CD4-positive, alpha-beta T cell (primary cell): ENCODE measurements at regions of chr16 and their contacts with region 1.

Region 1: DNA sequence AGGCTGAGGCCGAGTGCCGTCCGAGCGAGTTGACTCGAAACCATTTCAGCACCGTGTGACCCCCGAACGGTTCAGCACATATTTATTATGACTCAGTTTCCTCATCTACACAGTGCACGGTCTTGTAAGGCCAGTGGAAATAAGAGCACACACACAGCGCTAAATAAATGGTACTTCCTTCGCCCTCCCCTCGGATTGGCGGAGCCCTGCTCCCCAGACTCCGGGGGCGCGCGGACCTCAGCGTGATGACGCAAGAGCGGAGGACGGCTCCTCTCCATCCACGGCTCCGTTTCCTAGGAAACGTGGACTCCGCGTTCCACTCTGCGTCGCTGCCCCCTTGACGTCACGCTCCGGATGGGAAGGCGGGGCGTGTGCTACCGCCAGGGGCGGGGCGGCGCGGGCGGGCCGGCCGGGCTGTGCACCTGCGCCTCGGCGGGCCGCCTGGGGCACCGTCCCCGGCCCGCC is at the start of gene PARD6A:
- DNase-seq: peak; percentile 86 to 99 (median 93)
- ATAC-seq: peak; percentile 76
- H3K4me3 ChIP-seq: peak within 1 kb of the TSS; percentile 95
- H3K4me3 Mint-ChIP-seq: peak within 1 kb of the TSS; percentile 95
- H3K27ac ChIP-seq: peak within 1 kb of the TSS; percentile 93 to 99
- H3K27ac Mint-ChIP-seq: peak within 1 kb of the TSS; percentile 94
- H3K4me1 ChIP-seq: peaks cover 38% of the 10 kb centered on the region
- H3K4me1 Mint-ChIP-seq: peaks cover 37% of the 10 kb centered on the region
- H3K27me3 ChIP-seq: no peaks in the 10 kb centered on the region
- H3K27me3 Mint-ChIP-seq: no peaks in the 10 kb centered on the region
- CTCF ChIP-seq: no peak
- total RNA-seq, gene PARD6A: 4.5 to 4.7 TPM

Region 2: GRCh38 chr16:67537270-67537635 is 123.3 kb before region 1 on chr16:
- CTCF ChIA-PET with region 1: interaction called, 3 read pairs
- POLR2A ChIA-PET with region 1: interaction called, 16 read pairs
- intact Hi-C with region 1: no loop called
- DNase-seq: peak in 10 of 14 experiments; percentile 27 to 77 (median 57)
- ATAC-seq: peak; percentile 52
- H3K4me3 ChIP-seq: peak overlapping the region; percentile 84
- H3K4me3 Mint-ChIP-seq: peak overlapping the region; percentile 86
- H3K27ac ChIP-seq: peak overlapping the region; percentile 69 to 73
- H3K27ac Mint-ChIP-seq: peak overlapping the region; percentile 66
- H3K4me1 ChIP-seq: peaks cover 37% of the 10 kb centered on the region
- H3K4me1 Mint-ChIP-seq: peaks cover 49% of the 10 kb centered on the region
- H3K27me3 ChIP-seq: no peaks in the 10 kb centered on the region
- H3K27me3 Mint-ChIP-seq: no peaks in the 10 kb centered on the region
- CTCF ChIP-seq: no peak

Region 3: DNA sequence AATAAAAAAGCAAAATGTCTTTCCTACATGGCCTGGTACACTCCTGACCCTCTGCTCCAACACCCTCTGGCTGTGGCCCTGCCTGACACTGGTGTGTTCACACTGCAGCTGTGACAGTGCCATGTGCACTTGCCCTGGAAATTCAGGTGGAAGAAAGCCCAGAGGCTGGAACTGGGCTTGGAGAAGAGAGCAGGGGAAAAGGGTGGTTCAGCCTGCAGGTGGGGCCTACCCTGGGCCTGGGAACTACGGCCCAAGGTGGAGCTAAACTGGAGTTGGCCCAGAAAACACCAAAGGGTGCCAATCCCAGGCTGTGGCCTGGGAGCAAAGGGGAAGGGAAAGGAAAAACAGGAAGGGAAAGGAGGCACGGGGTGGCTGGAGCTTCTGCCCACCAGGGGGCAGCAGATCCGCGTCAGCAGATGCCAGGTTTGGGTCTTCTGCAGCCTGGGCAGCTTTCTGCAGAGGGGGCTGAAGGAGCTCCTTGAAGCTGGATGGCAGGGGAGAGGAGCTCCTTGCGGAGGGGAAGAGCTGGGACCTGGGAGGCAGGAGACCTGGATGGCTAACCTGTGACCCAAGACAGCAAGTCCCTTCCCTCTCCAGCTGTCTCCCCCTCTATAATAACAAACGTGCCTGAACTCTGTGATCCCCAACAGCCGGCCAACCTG is 113.7 kb before region 1 on chr16:
- CTCF ChIA-PET with region 1: interaction called, 4 read pairs
- POLR2A ChIA-PET with region 1: interaction called, 23 read pairs
- intact Hi-C with region 1: no loop called
- DNase-seq: peak; percentile 61 to 88 (median 72)
- ATAC-seq: peak; percentile 22
- H3K4me3 ChIP-seq: peak overlapping the region; percentile 44
- H3K4me3 Mint-ChIP-seq: peak overlapping the region; percentile 72
- H3K27ac ChIP-seq: peak overlapping the region; percentile 72 to 76
- H3K27ac Mint-ChIP-seq: peak overlapping the region; percentile 92
- H3K4me1 ChIP-seq: peaks cover 51% of the 10 kb centered on the region
- H3K4me1 Mint-ChIP-seq: peaks cover 50% of the 10 kb centered on the region
- H3K27me3 ChIP-seq: no peaks in the 10 kb centered on the region
- H3K27me3 Mint-ChIP-seq: no peaks in the 10 kb centered on the region
- CTCF ChIP-seq: peak; percentile 99

Region 4: GRCh38 chr16:67679935-67680897 is 19.6 kb after region 1 on chr16:
- CTCF ChIA-PET with region 1: no interaction called
- POLR2A ChIA-PET with region 1: no interaction called
- intact Hi-C with region 1: no loop called
- DNase-seq: no peak
- ATAC-seq: no peak
- H3K4me3 ChIP-seq: no peak overlapping the region
- H3K4me3 Mint-ChIP-seq: no peak overlapping the region
- H3K27ac ChIP-seq: no peak overlapping the region
- H3K27ac Mint-ChIP-seq: no peak overlapping the region
- H3K4me1 ChIP-seq: peaks cover 8% of the 10 kb centered on the region
- H3K4me1 Mint-ChIP-seq: peaks cover 10% of the 10 kb centered on the region
- H3K27me3 ChIP-seq: no peaks in the 10 kb centered on the region
- H3K27me3 Mint-ChIP-seq: no peaks in the 10 kb centered on the region
- CTCF ChIP-seq: no peak

Region 5: GRCh38 chr16:67708368-67708861 is 47.8 kb after region 1 on chr16:
- CTCF ChIA-PET with region 1: no interaction called
- POLR2A ChIA-PET with region 1: no interaction called
- intact Hi-C with region 1: no loop called
- DNase-seq: no peak
- ATAC-seq: no peak
- H3K4me3 ChIP-seq: no peak overlapping the region
- H3K4me3 Mint-ChIP-seq: no peak overlapping the region
- H3K27ac ChIP-seq: no peak overlapping the region
- H3K27ac Mint-ChIP-seq: no peak overlapping the region
- H3K4me1 ChIP-seq: peaks cover 7% of the 10 kb centered on the region
- H3K4me1 Mint-ChIP-seq: peaks cover 23% of the 10 kb centered on the region
- H3K27me3 ChIP-seq: no peaks in the 10 kb centered on the region
- H3K27me3 Mint-ChIP-seq: no peaks in the 10 kb centered on the region
- CTCF ChIP-seq: no peak

Region 6: DNA sequence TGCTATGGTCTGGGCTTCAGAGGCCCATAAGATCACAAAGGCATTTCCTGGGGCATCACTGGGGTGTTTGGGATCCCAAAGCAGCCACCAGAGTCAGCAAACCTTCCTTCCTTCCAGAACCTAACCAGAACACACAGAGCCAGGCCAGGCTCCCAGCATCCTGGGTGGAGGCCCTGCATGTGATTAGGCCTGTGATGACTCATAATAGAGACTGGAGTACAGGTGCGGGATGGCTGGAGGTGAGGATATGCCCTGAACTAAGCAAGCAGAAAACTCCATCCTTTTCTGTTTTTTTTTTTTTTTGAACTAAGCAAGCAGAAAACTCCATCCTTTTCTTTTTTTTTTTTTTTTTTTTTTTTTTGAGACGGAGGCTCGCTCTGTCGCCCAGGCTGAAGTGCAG is 76.3 kb after region 1 on chr16:
- CTCF ChIA-PET with region 1: no interaction called
- POLR2A ChIA-PET with region 1: no interaction called
- intact Hi-C with region 1: no loop called
- DNase-seq: no peak
- ATAC-seq: no peak
- H3K4me3 ChIP-seq: no peak overlapping the region
- H3K4me3 Mint-ChIP-seq: no peak overlapping the region
- H3K27ac ChIP-seq: no peak overlapping the region
- H3K27ac Mint-ChIP-seq: peak overlapping the region; percentile 27
- H3K4me1 ChIP-seq: no peaks in the 10 kb centered on the region
- H3K4me1 Mint-ChIP-seq: no peaks in the 10 kb centered on the region
- H3K27me3 ChIP-seq: no peaks in the 10 kb centered on the region
- H3K27me3 Mint-ChIP-seq: no peaks in the 10 kb centered on the region
- CTCF ChIP-seq: no peak